ENCODE measurements at regions of chr2 and their contacts with region 1.

Region 1: GRCh38 chr2:64404002-64404731 is 49.8 kb upstream of the LGALSL start:
- DNase-seq: no peak
- H3K4me3 ChIP-seq: no peak overlapping the region
- H3K4me3 Mint-ChIP-seq: no peak overlapping the region
- H3K27ac Mint-ChIP-seq: no peak overlapping the region
- H3K4me1 ChIP-seq: peaks cover 56% of the 10 kb centered on the region
- H3K4me1 Mint-ChIP-seq: peaks cover 41% of the 10 kb centered on the region
- H3K27me3 ChIP-seq: no peaks in the 10 kb centered on the region
- H3K27me3 Mint-ChIP-seq: no peaks in the 10 kb centered on the region
- CTCF ChIP-seq: no peak

Region 2: DNA sequence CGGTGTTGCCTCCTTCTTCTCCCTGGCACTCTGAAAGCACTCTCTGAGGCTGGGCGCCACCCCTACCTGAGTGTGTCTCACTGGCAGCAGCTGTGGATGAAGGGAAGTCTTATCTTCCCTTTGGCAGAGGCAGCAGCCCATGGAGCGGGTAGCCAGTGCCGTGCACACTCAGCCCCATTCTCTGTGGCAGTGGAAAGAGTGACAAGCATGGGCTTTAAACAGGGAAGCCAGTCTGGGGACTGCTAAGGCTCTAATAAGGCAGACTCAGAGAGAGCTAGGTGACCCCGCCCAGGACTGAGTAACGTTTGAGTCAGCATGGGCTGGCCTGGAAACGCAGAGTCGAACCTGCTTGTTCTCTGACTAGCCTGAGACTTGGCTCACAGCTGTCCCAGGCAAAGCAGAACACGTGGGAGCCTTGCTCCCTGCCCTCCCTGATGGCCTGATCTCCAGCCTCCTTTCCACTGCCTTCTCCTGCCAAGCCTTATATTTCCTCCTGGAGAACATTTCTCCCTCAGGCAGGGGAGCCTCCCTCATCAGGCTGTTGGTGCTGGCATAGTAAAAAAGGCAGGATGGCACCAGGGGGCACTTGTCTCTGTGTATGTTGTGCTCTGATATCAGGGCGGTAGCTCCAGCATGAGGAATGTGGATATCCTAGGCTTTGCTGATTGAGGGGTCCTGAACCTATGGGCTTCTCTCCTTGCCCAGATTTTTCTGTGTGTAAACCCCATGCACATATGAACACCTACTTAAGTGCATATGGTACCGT is 44.1 kb before region 1 on chr2:
- CTCF ChIA-PET with region 1: no interaction called
- POLR2A ChIA-PET with region 1: no interaction called
- intact Hi-C with region 1: loop called (anchors 5 kb)
- DNase-seq: peak; percentile 43 to 60
- H3K4me3 ChIP-seq: no peak overlapping the region
- H3K4me3 Mint-ChIP-seq: no peak overlapping the region
- H3K27ac Mint-ChIP-seq: no peak overlapping the region
- H3K4me1 ChIP-seq: peaks cover 24% of the 10 kb centered on the region
- H3K4me1 Mint-ChIP-seq: peaks cover 13% of the 10 kb centered on the region
- H3K27me3 ChIP-seq: no peaks in the 10 kb centered on the region
- H3K27me3 Mint-ChIP-seq: peaks cover 5% of the 10 kb centered on the region
- CTCF ChIP-seq: no peak

Region 3: GRCh38 chr2:64374686-64375085 is 29.5 kb before region 1 on chr2:
- CTCF ChIA-PET with region 1: no interaction called
- POLR2A ChIA-PET with region 1: no interaction called
- intact Hi-C with region 1: no loop called
- DNase-seq: no peak
- H3K4me3 ChIP-seq: no peak overlapping the region
- H3K4me3 Mint-ChIP-seq: no peak overlapping the region
- H3K27ac Mint-ChIP-seq: no peak overlapping the region
- H3K4me1 ChIP-seq: peaks cover 5% of the 10 kb centered on the region; the same call in 1 of the 2 replicates
- H3K4me1 Mint-ChIP-seq: peaks cover 5% of the 10 kb centered on the region
- H3K27me3 ChIP-seq: no peaks in the 10 kb centered on the region
- H3K27me3 Mint-ChIP-seq: no peaks in the 10 kb centered on the region
- CTCF ChIP-seq: no peak

Region 4: DNA sequence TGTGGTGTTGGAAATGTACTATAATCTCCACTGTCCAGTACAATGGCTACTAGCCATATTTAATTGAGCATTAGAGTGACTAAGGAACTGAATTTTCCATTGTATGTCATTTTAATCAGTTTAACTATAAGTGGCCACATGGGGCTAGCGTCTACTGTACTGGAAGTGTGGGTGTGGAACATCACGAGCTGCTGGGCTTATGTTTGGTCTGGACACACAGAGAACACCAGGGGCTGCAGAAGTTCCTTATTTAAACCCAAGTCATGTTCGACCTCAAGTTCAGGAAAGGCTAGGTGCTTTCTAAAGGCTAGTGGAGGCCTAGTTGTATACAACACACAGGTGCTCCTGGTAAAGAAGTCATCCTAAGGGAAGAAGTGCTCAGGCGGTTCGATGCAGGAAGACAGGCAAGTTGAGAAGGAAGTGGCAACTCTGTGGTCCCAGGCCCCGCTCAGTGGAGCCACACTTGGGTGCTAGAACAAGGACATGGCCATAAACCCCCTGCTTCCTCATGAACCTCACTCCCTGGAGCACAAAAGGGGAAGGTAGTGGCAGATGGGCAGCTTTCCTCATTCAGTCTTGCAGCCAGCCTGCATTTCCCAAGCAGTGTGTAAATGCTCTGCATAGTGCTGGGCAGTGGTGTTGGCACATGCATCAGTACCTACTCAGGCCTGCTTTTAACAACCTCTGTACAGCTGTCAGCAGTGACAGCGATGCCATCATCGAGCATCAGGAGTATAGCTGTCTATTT is 63.1 kb after region 1 on chr2:
- CTCF ChIA-PET with region 1: no interaction called
- POLR2A ChIA-PET with region 1: no interaction called
- intact Hi-C with region 1: no loop called
- DNase-seq: no peak
- H3K4me3 ChIP-seq: no peak overlapping the region
- H3K4me3 Mint-ChIP-seq: no peak overlapping the region
- H3K27ac Mint-ChIP-seq: no peak overlapping the region
- H3K4me1 ChIP-seq: no peaks in the 10 kb centered on the region
- H3K4me1 Mint-ChIP-seq: no peaks in the 10 kb centered on the region
- H3K27me3 ChIP-seq: no peaks in the 10 kb centered on the region
- H3K27me3 Mint-ChIP-seq: no peaks in the 10 kb centered on the region
- CTCF ChIP-seq: no peak

Region 5: DNA sequence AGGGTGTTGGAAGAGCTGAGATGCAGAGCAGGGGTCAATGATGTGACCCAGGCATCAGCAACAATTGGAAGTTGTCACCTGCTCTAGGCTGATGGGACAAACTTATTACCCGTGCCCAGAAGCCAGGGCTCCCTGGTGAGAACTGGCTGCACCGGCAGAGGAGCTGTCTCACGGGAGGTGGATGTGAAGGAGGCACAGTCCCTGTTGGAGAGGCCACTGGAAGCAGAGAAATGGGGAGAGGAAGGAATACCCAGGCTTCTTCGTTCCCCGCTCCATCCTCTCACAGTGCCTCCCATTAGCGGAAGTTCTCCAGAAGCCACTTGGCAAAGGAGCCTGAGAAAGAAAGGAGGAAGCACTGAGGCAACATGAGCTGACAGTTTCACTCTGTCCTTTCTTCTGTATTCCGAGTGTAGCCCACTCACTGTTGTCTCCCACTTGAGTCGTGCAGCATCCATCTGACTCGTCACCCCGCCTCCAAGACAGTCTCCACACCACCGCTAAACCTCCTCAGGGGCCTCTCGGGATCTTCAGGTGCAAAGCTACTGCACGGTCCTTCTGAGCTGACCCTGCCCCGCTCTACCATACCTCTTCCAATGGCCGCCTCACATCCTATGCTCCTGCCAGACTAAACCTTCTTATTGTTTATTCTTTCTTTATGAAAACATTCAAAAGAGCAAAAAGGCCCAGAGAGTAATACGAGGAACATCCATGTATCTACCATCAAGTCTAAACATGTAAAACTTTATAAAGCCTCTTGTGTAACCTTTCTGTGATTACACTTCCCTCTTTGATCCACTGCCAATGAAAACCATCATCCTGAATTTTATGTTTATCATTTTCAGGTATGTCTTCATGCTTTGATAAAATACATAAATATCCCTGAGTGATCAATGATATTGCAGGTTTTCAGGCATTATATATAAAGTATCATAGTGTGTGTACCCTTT is 100.9 kb after region 1 on chr2:
- CTCF ChIA-PET with region 1: no interaction called
- POLR2A ChIA-PET with region 1: no interaction called
- intact Hi-C with region 1: no loop called
- DNase-seq: no peak
- H3K4me3 ChIP-seq: no peak overlapping the region
- H3K4me3 Mint-ChIP-seq: no peak overlapping the region
- H3K27ac Mint-ChIP-seq: no peak overlapping the region
- H3K4me1 ChIP-seq: no peaks in the 10 kb centered on the region
- H3K4me1 Mint-ChIP-seq: no peaks in the 10 kb centered on the region
- H3K27me3 ChIP-seq: no peaks in the 10 kb centered on the region; the same call in none of the 2 replicates
- H3K27me3 Mint-ChIP-seq: peaks cover 3% of the 10 kb centered on the region
- CTCF ChIP-seq: no peak